CD8-positive, alpha-beta memory T cell (primary cell): ENCODE measurements at regions of chr12 and their contacts with region 1.

Region 1: GRCh38 chr12:55940065-55940732 is 9.2 kb downstream of the DGKA start:
- DNase-seq: peak; percentile 71 to 88 (median 78)
- H3K4me3 ChIP-seq: no peak overlapping the region
- H3K4me3 Mint-ChIP-seq: peak overlapping the region in 4 of 7 donors; percentile 24 to 60 (median 45)
- H3K27ac ChIP-seq: no peak overlapping the region
- H3K27ac Mint-ChIP-seq: peak overlapping the region; percentile 67 to 97 (median 90)
- H3K4me1 ChIP-seq: peaks cover 71% of the 10 kb centered on the region
- H3K4me1 Mint-ChIP-seq: peaks cover 60 to 80% (median 80%) of the 10 kb centered on the region in 3 donors
- H3K27me3 ChIP-seq: no peaks in the 10 kb centered on the region
- H3K27me3 Mint-ChIP-seq: no peaks in the 10 kb centered on the region

Region 2: DNA sequence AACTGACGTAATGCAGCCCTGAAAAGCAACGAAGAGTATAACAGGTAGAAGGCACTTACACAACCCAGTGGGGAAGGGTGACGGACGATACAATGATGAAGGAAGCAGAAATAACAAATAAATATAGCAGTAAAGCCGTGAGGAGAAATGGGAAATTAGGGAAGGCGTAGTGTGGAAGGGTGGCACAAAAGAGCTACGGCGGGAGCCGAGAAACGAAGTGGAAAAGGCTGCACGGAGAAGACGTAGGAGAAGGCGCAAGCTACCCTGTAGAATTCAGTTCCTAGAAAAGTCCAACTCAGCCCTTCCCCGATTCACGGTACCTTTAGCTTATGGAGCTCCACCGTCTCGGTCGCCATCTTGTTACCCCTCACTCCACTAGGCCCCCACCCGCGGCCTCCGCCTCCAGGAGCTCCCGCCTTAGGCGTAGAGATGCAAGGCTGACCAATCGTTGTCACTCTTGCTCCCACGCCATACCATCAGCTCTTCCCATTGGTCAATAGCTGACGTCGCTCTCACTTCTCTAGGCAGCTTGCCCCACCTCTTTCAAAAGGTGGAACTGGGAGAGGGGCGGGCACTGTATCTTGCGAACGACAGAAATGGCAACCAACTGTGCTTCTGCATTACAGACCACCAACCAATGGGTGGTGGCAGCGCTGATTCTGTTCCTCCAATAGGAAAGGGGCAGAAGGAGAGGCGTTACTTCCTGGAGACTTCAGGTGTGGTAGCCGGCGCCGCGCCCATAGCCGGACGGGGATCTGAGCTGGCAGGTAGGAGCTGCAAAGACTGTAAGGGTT is 122.7 kb before region 1 on chr12 and contains the starts of genes ORMDL2 and SARNP:
- CTCF ChIA-PET with region 1: interaction called, 22 read pairs
- POLR2A ChIA-PET with region 1: interaction called, 12 read pairs
- DNase-seq: peak; percentile 91 to 99 (median 98)
- H3K4me3 ChIP-seq: peak within 1 kb of the TSS; percentile 94
- H3K4me3 Mint-ChIP-seq: no peak within 1 kb of the TSS
- H3K27ac ChIP-seq: peak within 1 kb of the TSS; percentile 86
- H3K27ac Mint-ChIP-seq: no peak within 1 kb of the TSS
- H3K4me1 ChIP-seq: peaks cover 39% of the 10 kb centered on the region
- H3K4me1 Mint-ChIP-seq: peaks cover 27 to 39% (median 36%) of the 10 kb centered on the region in 3 donors
- H3K27me3 ChIP-seq: no peaks in the 10 kb centered on the region
- H3K27me3 Mint-ChIP-seq: no peaks in the 10 kb centered on the region
- total RNA-seq, gene ORMDL2: 49.0 to 49.7 TPM
- total RNA-seq, gene SARNP: 89.7 to 103 TPM

Region 3: GRCh38 chr12:55829967-55830600 is 110.1 kb before region 1 on chr12:
- CTCF ChIA-PET with region 1: interaction called, 18 read pairs
- POLR2A ChIA-PET with region 1: interaction called, 8 read pairs
- DNase-seq: peak in 3 of 5 donors; percentile 8 to 63 (median 42)
- H3K4me3 ChIP-seq: peak overlapping the region; percentile 96
- H3K4me3 Mint-ChIP-seq: peak overlapping the region; percentile 97 to 99 (median 98)
- H3K27ac ChIP-seq: peak overlapping the region; percentile 79
- H3K27ac Mint-ChIP-seq: peak overlapping the region; percentile 84 to 98 (median 96)
- H3K4me1 ChIP-seq: peaks cover 50% of the 10 kb centered on the region
- H3K4me1 Mint-ChIP-seq: peaks cover 46 to 69% (median 54%) of the 10 kb centered on the region in 3 donors
- H3K27me3 ChIP-seq: no peaks in the 10 kb centered on the region
- H3K27me3 Mint-ChIP-seq: no peaks in the 10 kb centered on the region

Region 4: DNA sequence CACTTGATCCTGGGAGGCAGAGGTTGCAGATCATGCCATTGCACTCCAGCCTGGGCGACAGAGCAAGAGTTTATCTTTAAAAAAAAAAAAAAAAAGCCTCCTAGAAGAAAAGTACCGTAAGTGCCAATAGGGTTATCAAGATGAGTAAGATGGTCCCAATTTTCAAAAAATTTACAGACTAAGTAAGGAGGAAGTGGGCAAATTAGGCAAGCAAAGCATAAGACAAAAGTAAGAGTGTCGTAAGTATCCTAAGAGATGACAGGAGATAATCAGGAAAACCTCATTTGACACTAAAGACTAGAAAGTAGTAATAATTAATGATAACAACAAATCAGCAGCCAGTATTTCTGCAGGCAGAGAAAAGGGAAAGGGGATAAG is 24.7 kb before region 1 on chr12:
- CTCF ChIA-PET with region 1: interaction called, 10 read pairs
- POLR2A ChIA-PET with region 1: no interaction called
- DNase-seq: no peak
- H3K4me3 ChIP-seq: no peak overlapping the region
- H3K4me3 Mint-ChIP-seq: no peak overlapping the region
- H3K27ac ChIP-seq: no peak overlapping the region
- H3K27ac Mint-ChIP-seq: peak overlapping the region in 2 of 8 donors; percentile 1 to 28
- H3K4me1 ChIP-seq: peaks cover 27% of the 10 kb centered on the region
- H3K4me1 Mint-ChIP-seq: peaks cover 26 to 57% (median 29%) of the 10 kb centered on the region in 3 donors
- H3K27me3 ChIP-seq: no peaks in the 10 kb centered on the region
- H3K27me3 Mint-ChIP-seq: peaks cover 0 to 2% of the 10 kb centered on the region in 2 donors

Region 5: DNA sequence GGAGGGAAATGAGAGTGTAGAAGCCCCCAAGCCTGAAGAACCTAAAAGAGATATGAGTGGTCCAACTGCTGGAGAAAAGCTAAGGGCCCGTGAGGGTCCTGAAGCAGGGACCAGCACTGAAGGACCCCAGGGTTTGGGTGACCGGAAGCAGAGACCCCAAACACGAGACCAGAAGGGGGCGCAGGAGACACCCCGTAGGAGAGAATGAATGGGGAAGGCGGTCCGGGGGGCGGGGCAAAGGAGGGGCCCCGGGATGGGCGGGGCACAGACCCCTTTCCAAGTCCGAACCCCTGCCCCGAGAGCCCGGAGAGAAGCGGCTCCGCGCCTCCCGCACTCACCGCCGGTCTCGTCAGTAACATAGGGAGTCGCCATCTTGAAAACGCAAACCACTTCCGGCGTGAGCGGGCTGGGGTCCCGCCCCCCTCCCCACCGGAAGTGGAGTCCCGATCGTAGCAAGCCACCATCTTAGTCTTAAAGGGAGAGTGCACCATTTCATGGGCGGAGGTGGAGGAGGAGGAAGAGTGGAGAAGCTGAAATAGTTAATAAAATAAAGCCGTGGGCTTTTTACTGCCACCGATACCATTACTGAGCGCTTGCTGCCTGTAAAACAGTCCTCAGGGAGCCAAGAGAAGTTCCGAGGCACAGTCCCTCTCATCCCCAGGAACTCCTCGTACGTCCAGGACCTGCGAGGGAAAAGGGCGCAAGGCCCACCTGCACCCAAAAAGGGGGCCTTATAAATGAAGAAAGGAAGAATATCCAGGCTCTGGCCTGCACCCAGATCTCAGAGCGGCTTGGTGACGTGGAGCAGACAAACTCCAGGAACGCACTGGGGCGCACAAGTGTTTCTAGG is 13.2 kb before region 1 on chr12:
- CTCF ChIA-PET with region 1: interaction called, 96 read pairs
- POLR2A ChIA-PET with region 1: interaction called, 7 read pairs
- DNase-seq: peak; percentile 82 to 94 (median 86)
- H3K4me3 ChIP-seq: peak overlapping the region; percentile 83
- H3K4me3 Mint-ChIP-seq: peak overlapping the region; percentile 94 to 100 (median 97)
- H3K27ac ChIP-seq: peak overlapping the region; percentile 79
- H3K27ac Mint-ChIP-seq: peak overlapping the region; percentile 91 to 99 (median 96)
- H3K4me1 ChIP-seq: peaks cover 46% of the 10 kb centered on the region
- H3K4me1 Mint-ChIP-seq: peaks cover 55 to 61% (median 58%) of the 10 kb centered on the region in 3 donors
- H3K27me3 ChIP-seq: no peaks in the 10 kb centered on the region
- H3K27me3 Mint-ChIP-seq: peaks cover 0 to 6% of the 10 kb centered on the region in 2 donors

Region 6: GRCh38 chr12:56476972-56477432 is 536.8 kb after region 1 on chr12:
- CTCF ChIA-PET with region 1: no interaction called
- POLR2A ChIA-PET with region 1: interaction called, 11 read pairs
- DNase-seq: no peak
- H3K4me3 ChIP-seq: no peak overlapping the region
- H3K4me3 Mint-ChIP-seq: no peak overlapping the region
- H3K27ac ChIP-seq: no peak overlapping the region
- H3K27ac Mint-ChIP-seq: peak overlapping the region in 4 of 8 donors; percentile 17 to 43 (median 18)
- H3K4me1 ChIP-seq: no peaks in the 10 kb centered on the region
- H3K4me1 Mint-ChIP-seq: peaks cover 0 to 8% (median 2%) of the 10 kb centered on the region in 3 donors
- H3K27me3 ChIP-seq: no peaks in the 10 kb centered on the region
- H3K27me3 Mint-ChIP-seq: no peaks in the 10 kb centered on the region